ENCODE measurements at regions of chr17 and their contacts with region 1.

Region 1: DNA sequence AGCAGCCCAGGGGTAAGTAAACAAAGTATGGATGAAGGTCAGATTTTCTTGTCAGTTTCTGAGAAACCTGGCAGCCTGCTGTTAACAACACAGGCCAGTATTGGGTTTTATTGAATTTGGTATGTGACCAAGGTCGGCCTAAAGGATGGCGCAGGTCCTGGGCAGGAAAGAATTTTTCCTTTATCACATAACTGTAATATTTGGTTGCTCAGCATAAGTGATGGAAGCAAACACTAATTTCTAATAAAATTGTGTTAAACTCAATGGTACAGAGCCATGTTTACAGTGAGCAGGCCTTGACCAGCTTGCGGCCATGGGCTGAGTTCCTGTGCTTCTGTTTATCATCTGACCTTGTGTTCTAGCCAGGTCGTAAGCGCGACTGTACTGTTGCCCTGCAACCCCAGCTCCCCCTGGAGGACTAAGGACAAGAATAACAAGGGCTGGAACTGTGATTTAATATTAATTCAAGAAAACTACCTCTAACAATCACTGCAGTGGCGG is 10.5 kb downstream of the POLDIP2 start:
- DNase-seq: no peak
- ATAC-seq: peak; percentile 57
- H3K4me3 ChIP-seq: peak overlapping the region; percentile 36; the same call in 1 of the 2 replicates
- H3K27ac ChIP-seq: peak overlapping the region; percentile 92
- H3K4me1 ChIP-seq: peaks cover 28% of the 10 kb centered on the region
- H3K27me3 ChIP-seq: no peaks in the 10 kb centered on the region
- CTCF ChIP-seq: peak; percentile 37; the same call in 1 of the 2 replicates

Region 2: DNA sequence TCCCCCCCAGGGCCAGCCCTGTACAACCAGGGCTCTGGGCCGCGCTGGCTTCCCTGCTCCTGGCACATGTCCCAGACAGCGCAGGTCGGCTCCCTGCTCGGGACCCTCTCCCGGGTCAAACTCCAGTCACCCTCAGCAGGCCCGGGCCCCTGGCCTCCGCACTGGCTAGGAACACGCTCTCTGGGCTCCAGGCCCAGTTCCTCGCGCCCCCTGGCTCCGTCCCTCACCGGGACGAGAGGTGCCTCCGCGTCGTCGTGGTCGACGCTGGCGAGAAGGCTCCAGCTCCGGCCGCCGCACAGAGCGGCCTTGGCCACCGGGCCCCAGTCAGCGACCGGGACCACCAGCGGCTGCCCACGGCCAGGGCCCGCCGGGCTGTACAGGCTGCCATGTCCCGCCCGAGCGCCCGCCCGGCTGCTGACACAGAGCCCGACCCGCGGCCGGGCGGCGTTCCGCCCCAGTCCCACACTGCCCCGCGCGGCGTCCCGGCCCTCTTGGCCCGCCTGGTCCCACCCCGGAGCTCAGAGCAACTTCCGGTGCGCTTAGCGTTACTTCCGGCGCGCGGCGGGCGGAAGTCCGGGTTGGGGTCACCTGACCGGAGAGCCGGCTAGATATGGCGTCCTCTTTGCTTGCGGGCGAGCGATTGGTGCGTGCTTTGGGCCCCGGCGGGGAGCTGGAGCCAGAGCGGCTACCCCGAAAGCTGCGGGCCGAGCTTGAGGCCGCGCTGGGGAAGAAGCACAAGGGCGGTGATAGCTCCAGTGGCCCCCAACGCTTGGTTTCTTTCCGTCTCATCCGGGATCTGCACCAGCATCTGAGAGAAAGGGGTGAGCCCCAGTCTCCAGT is 10.5 kb after region 1 on chr17 and contains the start of gene POLDIP2:
- CTCF ChIA-PET with region 1: no interaction called
- POLR2A ChIA-PET with region 1: no interaction called
- intact Hi-C with region 1: loop called (anchors 1 kb)
- DNase-seq: peak; percentile 90
- ATAC-seq: peak; percentile 99
- H3K4me3 ChIP-seq: peak within 1 kb of the TSS; percentile 89
- H3K27ac ChIP-seq: peak within 1 kb of the TSS; percentile 36; the same call in 1 of the 2 replicates
- H3K4me1 ChIP-seq: peaks cover 10% of the 10 kb centered on the region; the same call in 1 of the 2 replicates
- H3K27me3 ChIP-seq: no peaks in the 10 kb centered on the region
- CTCF ChIP-seq: no peak
- total RNA-seq, gene POLDIP2: 136 and 137 TPM in 2 replicates

Measured in PC-3 (cell line).